AG04450 (cell line): ENCODE measurements at regions of chr11 and their contacts with region 1.

Region 1: GRCh38 chr11:72112321-72113219 is at the start of gene ANAPC15:
- DNase-seq: peak; percentile 99
- H3K4me3 ChIP-seq: peak within 1 kb of the TSS; percentile 87
- H3K27ac ChIP-seq: peak within 1 kb of the TSS; percentile 99
- H3K27me3 ChIP-seq: no peaks in the 10 kb centered on the region
- CTCF ChIP-seq: no peak
- polyA plus RNA-seq, gene ANAPC15: 45.7 and 54.5 TPM in 2 replicates

Region 2: DNA sequence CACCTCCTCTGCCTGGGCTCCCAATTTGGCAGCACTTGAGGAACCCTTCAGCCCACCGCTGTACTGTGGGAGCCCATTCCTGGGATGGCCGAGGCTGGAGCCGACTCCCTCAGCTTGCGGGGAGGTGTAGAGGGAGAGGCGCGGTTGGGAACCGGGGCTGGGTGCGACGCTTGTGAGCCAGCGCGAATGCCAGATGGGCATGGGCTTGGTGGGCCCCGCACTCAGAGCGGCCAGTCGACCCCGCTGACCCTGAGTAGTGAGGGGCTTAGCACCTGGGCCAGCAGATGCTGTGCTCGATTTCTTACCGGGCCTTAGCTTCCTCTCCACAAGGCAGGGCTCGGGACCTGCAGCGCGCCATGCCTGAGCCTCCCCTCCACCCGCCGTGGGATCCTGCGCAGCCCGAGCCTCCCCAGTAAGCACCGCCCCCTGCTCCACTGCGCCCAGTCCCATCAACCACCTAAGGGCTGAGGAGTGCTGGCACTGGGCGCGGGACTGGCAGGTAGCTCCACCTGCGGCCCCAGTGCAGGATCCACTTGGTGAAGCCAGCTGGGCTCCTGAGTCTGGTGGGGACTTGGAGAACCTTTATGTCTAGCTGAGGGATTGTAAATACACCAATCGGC is 337.9 kb before region 1 on chr11:
- CTCF ChIA-PET with region 1: no interaction called
- POLR2A ChIA-PET with region 1: no interaction called
- DNase-seq: no peak
- H3K4me3 ChIP-seq: no peak overlapping the region
- H3K27ac ChIP-seq: no peak overlapping the region
- H3K27me3 ChIP-seq: no peaks in the 10 kb centered on the region
- CTCF ChIP-seq: no peak

Region 3: GRCh38 chr11:71962428-71963038 is 150.0 kb before region 1 on chr11:
- CTCF ChIA-PET with region 1: no interaction called
- POLR2A ChIA-PET with region 1: no interaction called
- DNase-seq: peak; percentile 13
- H3K4me3 ChIP-seq: no peak overlapping the region
- H3K27ac ChIP-seq: no peak overlapping the region
- H3K27me3 ChIP-seq: no peaks in the 10 kb centered on the region
- CTCF ChIP-seq: no peak

Region 4: DNA sequence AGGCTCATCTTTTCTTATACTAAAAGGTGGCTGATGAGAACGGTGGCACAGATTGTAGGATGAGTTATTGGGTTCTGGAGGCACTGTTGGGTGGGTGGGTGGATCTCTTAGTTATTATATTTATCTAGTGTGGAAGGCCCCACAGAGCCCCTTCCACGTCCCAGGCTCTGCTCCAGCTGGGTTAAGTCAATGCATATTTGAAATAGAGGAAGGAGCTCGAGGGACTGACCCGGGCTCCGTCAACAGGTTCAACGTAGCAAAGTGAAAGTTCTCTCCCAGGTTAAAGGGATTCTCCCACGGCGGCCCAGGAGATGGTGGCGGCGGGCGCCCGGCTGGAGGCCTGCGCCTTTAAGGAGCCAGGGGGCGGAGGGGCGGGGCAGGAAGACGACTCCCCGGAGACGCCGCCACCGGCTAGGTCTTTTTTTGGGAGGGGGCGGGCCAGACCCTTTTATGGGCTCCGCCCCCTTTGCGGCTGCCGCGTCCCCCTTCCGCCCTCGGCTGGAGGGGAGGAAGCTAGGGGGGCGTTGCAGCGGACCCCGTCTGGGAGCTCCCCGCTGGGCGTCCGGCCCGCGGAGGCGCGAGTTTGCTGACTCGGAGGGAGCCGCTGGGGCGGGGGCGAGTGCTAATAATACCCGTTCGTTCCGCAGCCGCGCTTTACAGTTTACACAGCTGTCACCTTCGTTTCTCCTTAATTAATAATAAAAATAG is 110.5 kb after region 1 on chr11:
- CTCF ChIA-PET with region 1: no interaction called
- POLR2A ChIA-PET with region 1: interaction called, 10 read pairs
- DNase-seq: peak; percentile 76
- H3K4me3 ChIP-seq: peak overlapping the region; percentile 83
- H3K27ac ChIP-seq: peak overlapping the region; percentile 65
- H3K27me3 ChIP-seq: peaks cover 7% of the 10 kb centered on the region
- CTCF ChIP-seq: peak; percentile 32; the same call in 1 of the 2 replicates

Region 5: GRCh38 chr11:72292106-72292785 is 179.7 kb after region 1 on chr11:
- CTCF ChIA-PET with region 1: no interaction called
- POLR2A ChIA-PET with region 1: no interaction called
- DNase-seq: no peak
- H3K4me3 ChIP-seq: no peak overlapping the region
- H3K27ac ChIP-seq: no peak overlapping the region
- H3K27me3 ChIP-seq: no peaks in the 10 kb centered on the region
- CTCF ChIP-seq: no peak